Esophagus muscularis mucosa (tissue), 4 donors: ENCODE measurements at regions of chr21 and their contacts with region 1.

Region 1: DNA sequence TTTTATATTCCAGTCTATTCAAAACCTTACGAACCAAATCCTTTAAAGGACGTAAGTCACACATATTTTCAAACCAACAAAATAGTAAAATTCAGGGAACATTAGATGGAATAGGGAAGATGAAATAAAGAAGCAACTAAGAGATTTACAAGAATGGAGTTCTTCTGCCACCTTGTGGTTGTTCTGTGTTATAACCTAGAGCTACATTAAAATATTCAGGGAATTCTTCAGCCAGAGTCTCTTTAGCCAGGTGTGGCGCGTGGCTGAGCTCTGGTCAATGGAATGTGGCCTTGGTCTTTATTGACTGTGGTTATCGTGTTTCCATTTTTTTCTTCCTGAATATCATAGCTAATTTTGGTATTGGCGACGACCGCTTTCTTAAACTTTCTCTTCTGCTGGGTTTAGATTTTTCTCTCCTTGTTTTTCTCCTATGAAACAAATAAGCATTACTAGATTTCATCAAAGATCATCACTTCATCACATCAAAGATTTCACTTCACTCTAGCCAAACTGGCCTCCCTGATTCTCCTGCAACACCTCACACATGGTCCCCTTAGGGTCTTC is 221.3 kb downstream of the MRPL39 start:
- DNase-seq: no peak
- H3K4me3 ChIP-seq: no peak overlapping the region
- H3K27ac ChIP-seq: no peak overlapping the region
- H3K4me1 ChIP-seq: no peaks in the 10 kb centered on the region
- H3K27me3 ChIP-seq: no peaks in the 10 kb centered on the region
- CTCF ChIP-seq: peak; percentile 73 to 86 (median 74)
- EP300 ChIP-seq: no peak
- POLR2A ChIP-seq: no peak

Region 2: GRCh38 chr21:25283720-25284119 is 102.3 kb before region 1 on chr21:
- intact Hi-C with region 1: loop called (anchors 10 kb)
- DNase-seq: no peak
- H3K4me3 ChIP-seq: no peak overlapping the region
- H3K27ac ChIP-seq: no peak overlapping the region
- H3K4me1 ChIP-seq: no peaks in the 10 kb centered on the region
- H3K27me3 ChIP-seq: no peaks in the 10 kb centered on the region
- CTCF ChIP-seq: no peak
- EP300 ChIP-seq: no peak
- POLR2A ChIP-seq: no peak

Region 3: GRCh38 chr21:25298512-25299491 is 87.2 kb before region 1 on chr21:
- intact Hi-C with region 1: no loop called
- DNase-seq: no peak
- H3K4me3 ChIP-seq: no peak overlapping the region
- H3K27ac ChIP-seq: no peak overlapping the region
- H3K4me1 ChIP-seq: no peaks in the 10 kb centered on the region
- H3K27me3 ChIP-seq: no peaks in the 10 kb centered on the region
- CTCF ChIP-seq: no peak
- EP300 ChIP-seq: no peak
- POLR2A ChIP-seq: no peak